Activated CD4-positive, alpha-beta T cell treated with anti-CD3 and anti-CD28 coated beads, Interleukin-2, amount 10 ng/mL, durations not matched to agents 24 days and 14 days (primary cell): ENCODE measurements at regions of chr15 and their contacts with region 1.

Region 1: DNA sequence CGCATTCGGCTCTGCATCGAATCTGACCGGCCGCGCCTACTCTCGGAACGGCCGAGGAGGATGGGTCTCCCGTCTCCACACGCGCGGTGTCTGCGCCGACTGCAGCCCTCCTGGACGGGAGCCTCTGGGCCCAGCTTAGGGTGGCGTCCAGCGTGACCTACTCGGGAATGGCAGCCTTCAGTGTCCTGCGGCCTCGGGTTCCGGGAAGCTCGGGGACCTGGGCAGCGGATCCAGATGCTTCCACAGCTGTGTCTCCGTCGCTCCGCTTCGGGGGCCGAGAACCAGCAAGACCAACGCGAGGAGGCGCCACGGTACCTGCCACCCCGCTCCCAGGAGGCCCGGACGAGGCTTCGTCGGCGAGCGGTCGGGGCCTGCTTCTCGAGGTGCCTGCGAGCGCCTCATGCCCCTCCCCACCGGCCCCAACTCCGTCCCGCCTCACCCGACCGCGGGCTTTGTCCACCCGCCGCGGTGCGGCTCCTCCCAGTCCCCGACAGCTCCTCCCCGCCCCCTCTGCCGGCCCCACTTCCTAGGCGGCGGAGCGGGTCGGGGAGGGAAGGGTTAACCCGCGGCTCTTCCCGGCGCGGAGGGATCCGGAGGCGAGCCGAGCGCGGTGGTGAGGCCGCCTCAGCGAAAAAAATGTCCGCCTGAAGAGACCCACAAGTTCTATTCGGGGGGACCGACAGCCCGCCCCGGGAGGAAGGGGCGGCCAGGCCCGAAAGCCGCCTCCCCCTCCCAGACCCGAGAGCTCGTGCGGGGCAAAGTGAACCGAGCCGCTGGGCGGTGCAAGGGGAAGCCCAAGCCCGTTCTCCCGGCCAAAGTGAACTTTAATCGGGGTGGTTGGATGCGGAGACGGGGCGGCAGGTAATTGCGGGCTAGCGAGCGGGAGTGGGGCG is at the start of gene TCF12:
- DNase-seq: peak; percentile 97
- H3K4me3 Mint-ChIP-seq: peak within 1 kb of the TSS; percentile 95
- H3K27ac Mint-ChIP-seq: peak within 1 kb of the TSS; percentile 84
- H3K4me1 Mint-ChIP-seq: peaks cover 26% of the 10 kb centered on the region
- H3K27me3 Mint-ChIP-seq: no peaks in the 10 kb centered on the region
- total RNA-seq, gene TCF12: 78.6 and 89.1 TPM in 2 replicates

Region 2: DNA sequence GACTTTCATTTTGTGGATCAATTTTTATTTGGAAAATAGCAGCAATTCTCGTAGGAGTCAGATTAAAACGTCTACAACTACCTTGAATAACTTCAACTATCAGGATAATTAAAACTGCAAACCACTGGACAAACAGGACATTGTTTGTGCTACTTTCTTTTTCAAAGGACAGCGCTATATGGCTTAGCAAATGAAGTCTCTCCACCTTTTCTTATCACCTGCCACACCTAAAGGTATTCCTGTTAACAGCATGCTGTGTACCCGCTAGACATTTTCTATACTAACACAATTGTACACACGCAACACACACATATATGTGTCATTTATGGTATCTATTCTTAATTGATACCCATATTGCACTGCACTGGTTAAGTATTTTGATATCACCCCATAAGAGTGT is 472.5 kb before region 1 on chr15:
- intact Hi-C with region 1: no loop called
- DNase-seq: no peak
- H3K4me3 Mint-ChIP-seq: no peak overlapping the region
- H3K27ac Mint-ChIP-seq: no peak overlapping the region
- H3K4me1 Mint-ChIP-seq: no peaks in the 10 kb centered on the region
- H3K27me3 Mint-ChIP-seq: peaks cover 7% of the 10 kb centered on the region

Region 3: GRCh38 chr15:56732921-56733797 is 185.1 kb before region 1 on chr15 and contains the start of gene ZNF280D:
- intact Hi-C with region 1: loop called (anchors 1 kb)
- DNase-seq: peak; percentile 94
- H3K4me3 Mint-ChIP-seq: peak within 1 kb of the TSS; percentile 91
- H3K27ac Mint-ChIP-seq: peak within 1 kb of the TSS; percentile 96
- H3K4me1 Mint-ChIP-seq: peaks cover 29% of the 10 kb centered on the region
- H3K27me3 Mint-ChIP-seq: peaks cover 2% of the 10 kb centered on the region
- total RNA-seq, gene ZNF280D: 25.9 and 26.2 TPM in 2 replicates

Region 4: GRCh38 chr15:56886932-56887781 is 31.1 kb before region 1 on chr15:
- intact Hi-C with region 1: loop called (anchors 1 kb)
- DNase-seq: peak; percentile 94
- H3K4me3 Mint-ChIP-seq: peak overlapping the region; percentile 82
- H3K27ac Mint-ChIP-seq: peak overlapping the region; percentile 87
- H3K4me1 Mint-ChIP-seq: peaks cover 20% of the 10 kb centered on the region
- H3K27me3 Mint-ChIP-seq: peaks cover 7% of the 10 kb centered on the region

Region 5: DNA sequence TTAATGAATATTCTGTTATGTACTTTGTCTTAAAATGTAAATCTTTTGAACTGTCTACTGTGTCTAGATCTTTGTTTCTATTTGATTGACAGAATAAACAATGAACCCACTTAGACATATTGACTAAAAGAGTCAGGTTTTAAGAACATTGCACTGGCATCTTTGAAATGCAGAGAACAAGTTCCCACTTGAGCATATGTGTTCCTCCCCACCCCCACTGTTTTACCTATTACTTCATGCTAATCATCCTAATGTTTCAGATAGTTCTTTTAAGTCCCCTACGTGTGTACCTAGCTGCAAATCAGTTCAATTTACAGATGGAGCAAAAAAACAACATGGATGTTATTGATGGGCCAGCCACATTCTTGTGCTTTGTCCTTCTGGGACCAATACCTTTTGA is 11.5 kb before region 1 on chr15:
- intact Hi-C with region 1: no loop called
- DNase-seq: no peak
- H3K4me3 Mint-ChIP-seq: no peak overlapping the region
- H3K27ac Mint-ChIP-seq: no peak overlapping the region
- H3K4me1 Mint-ChIP-seq: peaks cover 4% of the 10 kb centered on the region
- H3K27me3 Mint-ChIP-seq: peaks cover 1% of the 10 kb centered on the region

Region 6: DNA sequence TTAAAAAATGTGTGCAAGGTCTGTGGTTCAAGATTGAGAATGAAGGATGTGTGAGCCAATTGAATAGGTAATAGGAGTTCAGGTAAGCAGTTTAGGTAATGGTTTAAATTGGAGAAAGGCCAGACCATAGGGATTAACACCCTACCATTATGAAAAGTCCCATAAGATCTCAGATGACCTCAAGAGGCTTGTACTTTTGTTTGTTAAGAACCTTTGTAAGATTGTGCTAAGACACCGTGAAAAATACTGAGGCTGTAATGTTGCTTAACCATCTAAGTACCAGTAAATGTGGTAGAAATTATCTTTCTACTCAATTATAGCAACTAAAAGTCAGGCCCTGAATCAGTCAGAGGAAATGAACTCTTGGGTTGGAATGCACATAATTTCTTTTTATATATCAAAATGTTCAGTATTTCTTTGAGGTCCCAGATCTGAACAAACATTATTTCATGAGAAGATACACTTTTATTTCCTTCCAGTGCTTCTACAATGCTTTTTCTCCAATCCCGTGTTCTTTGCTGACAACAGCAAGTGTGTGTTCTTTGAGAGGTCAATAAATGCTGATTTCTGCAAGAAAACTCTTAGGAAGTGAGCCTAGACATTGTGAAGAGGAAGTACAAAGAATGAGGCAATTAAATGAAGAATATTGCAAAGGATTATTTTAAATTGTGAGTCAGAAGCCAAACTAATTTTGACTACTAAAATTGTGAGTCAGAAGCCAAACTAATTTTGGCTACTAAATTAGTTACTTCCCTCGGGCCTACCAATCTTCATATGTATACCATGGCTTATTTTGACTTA is 66.6 kb after region 1 on chr15:
- intact Hi-C with region 1: loop called (anchors 5 kb)
- DNase-seq: no peak
- H3K4me3 Mint-ChIP-seq: no peak overlapping the region
- H3K27ac Mint-ChIP-seq: no peak overlapping the region
- H3K4me1 Mint-ChIP-seq: peaks cover 24% of the 10 kb centered on the region
- H3K27me3 Mint-ChIP-seq: no peaks in the 10 kb centered on the region

Region 7: DNA sequence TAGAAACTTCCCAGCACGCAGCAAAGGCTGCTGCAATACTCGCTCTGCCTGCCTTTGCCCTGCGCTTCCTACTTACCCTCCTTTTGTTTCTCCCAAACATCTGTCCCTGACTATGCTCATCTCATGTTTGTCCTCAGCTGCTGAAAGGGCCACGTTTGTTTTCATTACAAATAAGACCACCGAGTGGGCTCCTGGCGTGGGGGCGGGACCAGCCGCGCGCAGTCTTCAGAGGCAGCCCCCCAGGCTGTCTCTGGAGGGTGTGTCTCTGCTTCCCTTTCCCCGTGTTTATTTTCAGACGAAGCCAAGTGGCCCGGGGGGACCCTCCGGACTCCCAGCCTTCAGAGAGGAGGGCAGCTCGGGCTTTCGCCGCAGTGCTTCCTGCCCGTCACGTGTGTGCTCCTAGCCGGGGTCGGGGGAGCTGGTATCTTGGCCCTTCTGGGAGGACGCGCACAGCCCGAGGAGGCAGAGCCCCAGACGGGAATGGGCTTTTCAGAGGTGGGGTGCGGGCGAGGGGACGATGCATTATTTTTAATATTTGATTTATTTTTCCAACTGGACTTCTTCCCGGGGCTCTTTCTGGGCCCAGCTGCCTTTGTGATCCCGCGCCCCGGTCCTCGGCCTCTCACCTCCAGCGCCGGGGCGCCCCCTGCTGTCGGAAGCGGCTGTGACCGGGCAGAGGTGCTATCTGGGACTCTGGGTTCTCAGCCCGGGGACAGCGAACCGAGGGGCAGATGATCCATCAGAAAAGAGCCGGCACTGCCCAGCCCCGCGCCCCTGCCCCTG is 388.1 kb after region 1 on chr15:
- intact Hi-C with region 1: loop called (anchors 1 kb)
- DNase-seq: peak; percentile 96
- H3K4me3 Mint-ChIP-seq: peak overlapping the region; percentile 71
- H3K27ac Mint-ChIP-seq: no peak overlapping the region
- H3K4me1 Mint-ChIP-seq: peaks cover 5% of the 10 kb centered on the region
- H3K27me3 Mint-ChIP-seq: peaks cover 9% of the 10 kb centered on the region

Region 8: DNA sequence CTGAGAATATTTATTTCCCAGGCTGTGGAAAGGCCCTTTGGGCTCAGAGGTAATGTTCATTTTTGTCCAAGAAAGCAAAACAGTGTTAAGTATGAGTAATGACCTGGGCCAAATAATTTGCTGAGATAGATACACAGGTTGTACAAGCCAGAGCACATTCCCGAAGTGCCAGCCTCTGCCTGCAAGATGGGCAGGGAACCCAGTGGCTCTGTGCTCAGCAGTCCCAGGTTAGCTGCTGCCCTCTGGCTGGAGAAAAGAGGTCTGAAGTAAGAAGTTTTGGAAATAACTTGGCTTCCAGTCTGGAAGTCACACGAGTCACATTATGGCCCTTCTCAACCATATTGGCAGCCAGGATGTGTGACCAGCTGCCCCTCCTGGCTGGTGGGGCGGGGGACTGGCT is 693.6 kb after region 1 on chr15:
- intact Hi-C with region 1: no loop called
- DNase-seq: no peak
- H3K4me3 Mint-ChIP-seq: no peak overlapping the region
- H3K27ac Mint-ChIP-seq: no peak overlapping the region
- H3K4me1 Mint-ChIP-seq: no peaks in the 10 kb centered on the region
- H3K27me3 Mint-ChIP-seq: peaks cover 2% of the 10 kb centered on the region